ENCODE measurements at regions of chr17 and their contacts with region 1.

Region 1: GRCh38 chr17:6249732-6250131 is 179.6 kb downstream of the WSCD1 start:
- DNase-seq: no peak
- H3K4me3 ChIP-seq: no peak overlapping the region
- H3K27ac ChIP-seq: no peak overlapping the region
- H3K4me1 ChIP-seq: peaks cover 9% of the 10 kb centered on the region
- H3K27me3 ChIP-seq: peaks cover 2% of the 10 kb centered on the region
- CTCF ChIP-seq: no peak

Region 2: GRCh38 chr17:6027342-6028024 is 222.2 kb before region 1 on chr17:
- CTCF ChIA-PET with region 1: no interaction called
- dilution Hi-C with region 1: no loop called
- in situ Hi-C with region 1: no loop called
- intact Hi-C with region 1: no loop called
- DNase-seq: no peak
- H3K4me3 ChIP-seq: no peak overlapping the region
- H3K27ac ChIP-seq: no peak overlapping the region
- H3K4me1 ChIP-seq: no peaks in the 10 kb centered on the region
- H3K27me3 ChIP-seq: no peaks in the 10 kb centered on the region
- CTCF ChIP-seq: no peak

Region 3: GRCh38 chr17:6179017-6179416 is 70.7 kb before region 1 on chr17:
- CTCF ChIA-PET with region 1: no interaction called
- dilution Hi-C with region 1: no loop called
- in situ Hi-C with region 1: no loop called
- intact Hi-C with region 1: no loop called
- DNase-seq: no peak
- H3K4me3 ChIP-seq: no peak overlapping the region
- H3K27ac ChIP-seq: no peak overlapping the region
- H3K4me1 ChIP-seq: no peaks in the 10 kb centered on the region
- H3K27me3 ChIP-seq: no peaks in the 10 kb centered on the region
- CTCF ChIP-seq: no peak

Region 4: GRCh38 chr17:6205033-6205432 is 44.7 kb before region 1 on chr17:
- CTCF ChIA-PET with region 1: no interaction called
- dilution Hi-C with region 1: loop called (anchors 5 kb)
- in situ Hi-C with region 1: no loop called
- intact Hi-C with region 1: no loop called
- DNase-seq: no peak
- H3K4me3 ChIP-seq: no peak overlapping the region
- H3K27ac ChIP-seq: no peak overlapping the region
- H3K4me1 ChIP-seq: no peaks in the 10 kb centered on the region
- H3K27me3 ChIP-seq: peaks cover 6% of the 10 kb centered on the region
- CTCF ChIP-seq: no peak